ENCODE measurements at regions of chr6 and their contacts with region 1.

Region 1: GRCh38 chr6:168895102-168895812 is 358.4 kb downstream of the THBS2 start:
- DNase-seq: peak; percentile 60
- ATAC-seq: peak; percentile 97
- H3K4me3 ChIP-seq: no peak overlapping the region
- H3K27ac ChIP-seq: no peak overlapping the region
- H3K4me1 ChIP-seq: no peaks in the 10 kb centered on the region
- H3K27me3 ChIP-seq: peaks cover 5% of the 10 kb centered on the region; the same call in 1 of the 2 replicates
- CTCF ChIP-seq: peak; percentile 95
- POLR2A ChIP-seq: peak; percentile 28; the same call in 1 of the 2 replicates
- RAD21 ChIP-seq: peak; percentile 97

Region 2: DNA sequence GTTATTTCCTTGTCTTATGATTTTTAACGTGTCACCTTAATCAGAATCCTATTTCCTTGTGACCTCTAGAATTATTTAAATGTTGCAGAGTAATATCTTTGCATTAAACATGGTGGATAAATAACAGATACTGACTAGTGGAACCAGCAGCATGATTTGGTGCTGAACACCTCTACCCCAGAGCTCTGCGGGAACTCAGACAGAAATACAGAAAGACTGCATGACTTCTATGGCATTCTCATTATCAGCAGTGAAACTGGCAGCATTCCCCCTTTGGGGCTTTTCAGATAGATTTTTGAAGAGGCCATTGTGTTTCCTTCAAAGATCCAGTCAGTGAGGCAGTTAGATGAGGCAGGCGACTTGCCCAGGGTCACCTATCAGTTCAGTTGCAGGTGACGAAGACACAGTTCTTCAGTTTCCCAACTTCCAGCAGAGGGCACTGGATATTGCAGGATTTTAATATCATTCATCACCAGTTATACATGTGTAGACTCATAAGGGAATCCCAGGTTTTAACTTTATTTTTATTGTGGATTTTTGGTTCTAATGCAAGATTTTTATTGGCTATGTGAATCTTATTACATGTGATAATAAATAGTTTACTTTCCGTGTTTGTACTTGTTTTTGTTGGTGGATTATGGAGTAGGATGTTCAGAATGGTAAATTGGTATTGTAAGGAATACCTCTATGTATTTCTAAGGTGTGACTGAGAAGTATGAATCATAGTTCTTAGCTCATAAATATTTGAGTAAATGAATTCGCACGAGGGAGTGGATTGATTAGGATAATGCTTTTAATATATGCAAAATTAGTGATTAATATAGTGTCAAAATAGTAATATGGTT is 987.2 kb before region 1 on chr6:
- CTCF ChIA-PET with region 1: no interaction called
- POLR2A ChIA-PET with region 1: no interaction called
- dilution Hi-C with region 1: no loop called
- in situ Hi-C with region 1: loop called (anchors 25 kb)
- intact Hi-C with region 1: no loop called
- DNase-seq: peak; percentile 28
- ATAC-seq: peak; percentile 72
- H3K4me3 ChIP-seq: no peak overlapping the region
- H3K27ac ChIP-seq: no peak overlapping the region
- H3K4me1 ChIP-seq: no peaks in the 10 kb centered on the region
- H3K27me3 ChIP-seq: no peaks in the 10 kb centered on the region
- CTCF ChIP-seq: peak; percentile 48
- POLR2A ChIP-seq: no peak
- RAD21 ChIP-seq: peak; percentile 58

Region 3: DNA sequence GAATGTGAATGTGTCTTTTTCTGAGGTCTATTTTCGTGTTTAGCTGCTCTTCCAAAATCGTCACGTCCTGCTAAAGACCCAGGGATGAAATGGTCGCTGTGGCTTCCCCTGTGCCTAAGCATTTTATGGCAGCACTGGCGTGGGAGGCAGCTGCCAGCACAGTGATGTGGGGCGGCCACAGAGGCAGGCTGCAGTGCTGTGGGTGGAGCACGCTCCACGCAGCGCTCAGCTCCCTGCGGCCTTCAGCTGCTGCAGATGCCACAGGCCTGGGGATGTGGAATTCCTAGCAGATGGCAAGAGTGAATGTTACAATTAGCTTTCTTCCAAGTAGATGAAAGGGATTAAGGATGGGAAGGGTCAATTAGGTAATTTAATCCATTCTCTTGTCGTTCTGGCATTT is 211.6 kb before region 1 on chr6:
- CTCF ChIA-PET with region 1: no interaction called
- POLR2A ChIA-PET with region 1: no interaction called
- dilution Hi-C with region 1: no loop called
- in situ Hi-C with region 1: no loop called
- intact Hi-C with region 1: no loop called
- DNase-seq: no peak
- ATAC-seq: no peak
- H3K4me3 ChIP-seq: no peak overlapping the region
- H3K27ac ChIP-seq: no peak overlapping the region
- H3K4me1 ChIP-seq: no peaks in the 10 kb centered on the region
- H3K27me3 ChIP-seq: no peaks in the 10 kb centered on the region
- CTCF ChIP-seq: no peak
- POLR2A ChIP-seq: no peak
- RAD21 ChIP-seq: no peak

Region 4: DNA sequence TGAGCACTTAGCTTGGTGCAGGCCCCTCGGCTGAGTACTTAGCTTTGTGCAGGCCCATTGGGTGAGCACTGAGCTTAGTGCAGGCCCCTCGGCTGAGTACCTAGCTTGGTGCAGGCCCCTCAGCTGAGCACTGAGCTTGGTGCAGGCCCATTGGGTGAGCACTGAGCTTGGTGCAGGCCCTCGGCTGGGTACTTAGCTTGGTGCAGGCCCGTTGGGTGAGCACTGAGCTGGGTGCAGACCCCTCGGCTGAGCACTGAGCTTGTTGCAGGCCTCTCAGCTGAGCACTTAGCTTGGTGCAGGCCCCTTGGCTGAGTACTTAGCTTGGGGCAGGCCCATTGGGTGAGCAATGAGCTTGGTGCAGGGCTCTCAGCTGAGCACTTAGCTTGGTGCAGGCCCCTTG is 28.7 kb before region 1 on chr6:
- CTCF ChIA-PET with region 1: no interaction called
- POLR2A ChIA-PET with region 1: no interaction called
- dilution Hi-C with region 1: no loop called
- in situ Hi-C with region 1: no loop called
- intact Hi-C with region 1: no loop called
- DNase-seq: no peak
- ATAC-seq: no peak
- H3K4me3 ChIP-seq: no peak overlapping the region
- H3K27ac ChIP-seq: no peak overlapping the region
- H3K4me1 ChIP-seq: no peaks in the 10 kb centered on the region
- H3K27me3 ChIP-seq: no peaks in the 10 kb centered on the region
- CTCF ChIP-seq: no peak
- POLR2A ChIP-seq: no peak
- RAD21 ChIP-seq: no peak

Region 5: DNA sequence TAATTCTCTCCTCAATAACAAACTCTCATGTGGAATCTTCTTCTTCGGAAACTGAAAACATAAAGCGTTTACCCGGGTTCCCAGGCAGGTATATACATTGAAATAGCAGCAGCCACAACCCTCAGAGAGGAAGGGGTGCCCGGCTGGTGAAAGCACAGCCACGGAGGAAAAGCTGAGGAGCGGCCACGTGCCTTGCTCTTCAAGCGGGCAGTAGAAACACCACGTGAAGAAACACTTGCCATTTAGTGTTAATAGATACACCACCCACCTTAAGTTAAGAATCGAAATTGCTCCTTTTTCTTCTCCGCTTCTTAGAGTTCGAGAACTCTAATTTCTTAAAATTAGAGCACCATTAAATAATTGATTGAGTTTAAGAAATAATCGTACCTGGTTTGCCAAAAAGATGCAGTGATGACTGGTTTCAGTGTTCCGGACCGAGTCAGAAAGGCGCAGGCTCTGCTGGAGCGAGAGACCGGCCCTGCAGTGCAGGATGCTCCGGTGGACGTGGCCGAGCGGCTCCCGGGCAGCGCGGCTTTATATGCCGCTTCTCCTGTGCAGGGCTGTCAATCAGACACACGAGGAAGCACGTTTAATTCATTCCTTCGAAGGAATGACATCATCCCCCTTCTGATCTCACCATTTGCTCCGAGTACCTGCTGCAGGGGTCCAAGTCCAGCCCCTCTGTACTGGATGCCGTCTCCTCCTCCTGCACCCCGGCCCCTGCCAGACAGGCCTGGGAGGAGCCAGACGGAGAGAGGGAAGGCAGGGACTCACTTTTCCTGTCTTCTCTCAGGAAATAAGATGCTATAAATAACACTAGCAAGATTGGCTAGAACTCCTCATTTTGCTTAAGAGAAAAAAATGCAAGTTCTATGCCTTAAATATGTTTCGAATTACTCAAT is 358.3 kb after region 1 on chr6 and contains the start of gene THBS2:
- CTCF ChIA-PET with region 1: no interaction called
- POLR2A ChIA-PET with region 1: no interaction called
- dilution Hi-C with region 1: no loop called
- in situ Hi-C with region 1: no loop called
- intact Hi-C with region 1: loop called (anchors 2 kb)
- DNase-seq: peak; percentile 93
- ATAC-seq: peak; percentile 77
- H3K4me3 ChIP-seq: peak within 1 kb of the TSS; percentile 68
- H3K27ac ChIP-seq: peak within 1 kb of the TSS; percentile 51
- H3K4me1 ChIP-seq: peaks cover 15% of the 10 kb centered on the region
- H3K27me3 ChIP-seq: no peaks in the 10 kb centered on the region
- CTCF ChIP-seq: no peak
- POLR2A ChIP-seq: peak; percentile 95
- RAD21 ChIP-seq: no peak; the same call in 1 of the 2 replicates
- total RNA-seq, gene THBS2: 101 and 113 TPM in 2 replicates

Region 6: GRCh38 chr6:169513478-169514193 is 618.4 kb after region 1 on chr6:
- CTCF ChIA-PET with region 1: no interaction called
- POLR2A ChIA-PET with region 1: no interaction called
- dilution Hi-C with region 1: no loop called
- in situ Hi-C with region 1: loop called (anchors 10 kb)
- intact Hi-C with region 1: no loop called
- DNase-seq: no peak
- ATAC-seq: no peak
- H3K4me3 ChIP-seq: no peak overlapping the region
- H3K27ac ChIP-seq: no peak overlapping the region
- H3K4me1 ChIP-seq: no peaks in the 10 kb centered on the region
- H3K27me3 ChIP-seq: no peaks in the 10 kb centered on the region
- CTCF ChIP-seq: no peak
- POLR2A ChIP-seq: no peak
- RAD21 ChIP-seq: no peak

Region 7: GRCh38 chr6:169654598-169655391 is 759.5 kb after region 1 on chr6:
- CTCF ChIA-PET with region 1: no interaction called
- POLR2A ChIA-PET with region 1: no interaction called
- dilution Hi-C with region 1: no loop called
- in situ Hi-C with region 1: no loop called
- intact Hi-C with region 1: loop called (anchors 10 kb)
- DNase-seq: peak; percentile 61
- ATAC-seq: peak; percentile 93
- H3K4me3 ChIP-seq: peak overlapping the region; percentile 55
- H3K27ac ChIP-seq: peak overlapping the region; percentile 56
- H3K4me1 ChIP-seq: no peaks in the 10 kb centered on the region
- H3K27me3 ChIP-seq: no peaks in the 10 kb centered on the region
- CTCF ChIP-seq: peak; percentile 41; the same call in 1 of the 2 replicates
- POLR2A ChIP-seq: no peak; the same call in 1 of the 2 replicates
- RAD21 ChIP-seq: peak; percentile 56

Region 8: GRCh38 chr6:170516783-170517616 is 1621.7 kb after region 1 on chr6:
- CTCF ChIA-PET with region 1: no interaction called
- POLR2A ChIA-PET with region 1: no interaction called
- dilution Hi-C with region 1: no loop called
- in situ Hi-C with region 1: no loop called
- intact Hi-C with region 1: loop called (anchors 5 kb)
- DNase-seq: peak; percentile 78
- ATAC-seq: peak; percentile 100
- H3K4me3 ChIP-seq: no peak overlapping the region
- H3K27ac ChIP-seq: no peak overlapping the region
- H3K4me1 ChIP-seq: no peaks in the 10 kb centered on the region
- H3K27me3 ChIP-seq: peaks cover 3% of the 10 kb centered on the region
- CTCF ChIP-seq: peak; percentile 79
- POLR2A ChIP-seq: no peak
- RAD21 ChIP-seq: peak; percentile 94